AG04450 (cell line): ENCODE measurements at regions of chr2 and their contacts with region 1.

Region 1: DNA sequence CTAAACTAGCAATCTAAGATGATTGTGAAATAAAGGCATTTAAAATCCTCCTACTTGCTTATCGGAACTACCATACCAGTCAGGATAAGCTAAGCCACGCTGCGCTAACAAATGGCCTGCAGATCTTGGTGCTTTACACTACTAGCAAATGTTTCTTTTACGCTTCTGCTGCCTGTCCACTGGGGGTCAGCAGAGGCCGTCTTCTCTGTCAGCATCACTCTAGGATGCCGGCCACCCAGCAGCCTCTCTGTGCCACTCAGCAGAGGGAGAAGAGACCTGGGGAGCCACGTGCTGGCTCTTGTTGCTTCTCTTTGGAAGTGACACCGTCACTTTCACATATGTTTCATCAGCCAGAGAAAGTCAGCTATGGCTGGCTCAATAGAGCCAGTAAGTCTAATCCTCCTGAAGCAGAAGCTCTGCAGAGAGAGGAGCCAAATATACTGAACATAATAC is 36.6 kb downstream of the COPS8 start:
- DNase-seq: peak; percentile 54
- H3K4me3 ChIP-seq: no peak overlapping the region
- H3K27ac ChIP-seq: no peak overlapping the region
- H3K27me3 ChIP-seq: no peaks in the 10 kb centered on the region
- CTCF ChIP-seq: peak; percentile 74

Region 2: GRCh38 chr2:236919209-236919608 is 203.0 kb before region 1 on chr2:
- CTCF ChIA-PET with region 1: no interaction called
- POLR2A ChIA-PET with region 1: no interaction called
- DNase-seq: no peak
- H3K4me3 ChIP-seq: no peak overlapping the region
- H3K27ac ChIP-seq: no peak overlapping the region
- H3K27me3 ChIP-seq: peaks cover 7% of the 10 kb centered on the region
- CTCF ChIP-seq: no peak

Region 3: GRCh38 chr2:237109421-237109934 is 12.8 kb before region 1 on chr2:
- CTCF ChIA-PET with region 1: interaction called, 12 read pairs
- POLR2A ChIA-PET with region 1: no interaction called
- DNase-seq: no peak
- H3K4me3 ChIP-seq: no peak overlapping the region
- H3K27ac ChIP-seq: no peak overlapping the region
- H3K27me3 ChIP-seq: no peaks in the 10 kb centered on the region
- CTCF ChIP-seq: no peak

Region 4: GRCh38 chr2:237165405-237166276 is 43.4 kb after region 1 on chr2:
- CTCF ChIA-PET with region 1: interaction called, 12 read pairs
- POLR2A ChIA-PET with region 1: no interaction called
- DNase-seq: no peak
- H3K4me3 ChIP-seq: no peak overlapping the region
- H3K27ac ChIP-seq: no peak overlapping the region
- H3K27me3 ChIP-seq: no peaks in the 10 kb centered on the region
- CTCF ChIP-seq: peak; percentile 72

Region 5: DNA sequence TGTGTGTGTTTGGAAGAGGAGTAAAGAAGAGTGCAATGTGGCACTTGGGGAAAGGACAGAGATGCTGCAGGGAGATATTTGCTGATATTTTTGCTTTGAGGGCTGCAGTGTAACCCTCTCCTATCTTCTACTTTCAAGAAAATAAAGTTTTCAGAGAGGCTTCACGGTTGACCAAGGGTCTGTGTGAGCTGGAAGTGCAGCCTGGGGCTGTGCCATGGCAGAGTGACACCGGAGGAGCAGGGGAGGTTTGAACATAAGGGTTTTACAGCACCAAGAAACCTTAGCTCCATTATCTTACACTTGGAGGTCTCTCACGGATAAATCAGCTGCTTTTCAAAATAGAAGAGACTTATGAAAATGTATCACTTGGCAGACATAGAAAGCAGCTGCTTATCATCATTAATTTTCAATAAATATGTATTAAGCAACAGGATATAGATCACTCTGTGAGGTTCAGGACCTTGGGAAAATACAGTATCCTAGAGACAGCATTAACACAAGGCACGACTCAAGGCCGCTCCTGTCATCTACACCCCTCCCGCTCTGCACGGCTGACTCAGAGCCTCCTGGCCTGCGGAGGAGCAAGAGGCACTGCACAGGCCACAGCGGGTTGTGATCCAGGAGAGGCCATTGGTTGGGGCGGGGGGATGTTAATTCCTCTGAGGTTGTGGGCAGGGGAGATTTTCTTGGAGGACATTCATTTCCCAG is 91.2 kb after region 1 on chr2:
- CTCF ChIA-PET with region 1: no interaction called
- POLR2A ChIA-PET with region 1: no interaction called
- DNase-seq: no peak
- H3K4me3 ChIP-seq: no peak overlapping the region
- H3K27ac ChIP-seq: peak overlapping the region; percentile 90
- H3K27me3 ChIP-seq: no peaks in the 10 kb centered on the region
- CTCF ChIP-seq: no peak

Region 6: DNA sequence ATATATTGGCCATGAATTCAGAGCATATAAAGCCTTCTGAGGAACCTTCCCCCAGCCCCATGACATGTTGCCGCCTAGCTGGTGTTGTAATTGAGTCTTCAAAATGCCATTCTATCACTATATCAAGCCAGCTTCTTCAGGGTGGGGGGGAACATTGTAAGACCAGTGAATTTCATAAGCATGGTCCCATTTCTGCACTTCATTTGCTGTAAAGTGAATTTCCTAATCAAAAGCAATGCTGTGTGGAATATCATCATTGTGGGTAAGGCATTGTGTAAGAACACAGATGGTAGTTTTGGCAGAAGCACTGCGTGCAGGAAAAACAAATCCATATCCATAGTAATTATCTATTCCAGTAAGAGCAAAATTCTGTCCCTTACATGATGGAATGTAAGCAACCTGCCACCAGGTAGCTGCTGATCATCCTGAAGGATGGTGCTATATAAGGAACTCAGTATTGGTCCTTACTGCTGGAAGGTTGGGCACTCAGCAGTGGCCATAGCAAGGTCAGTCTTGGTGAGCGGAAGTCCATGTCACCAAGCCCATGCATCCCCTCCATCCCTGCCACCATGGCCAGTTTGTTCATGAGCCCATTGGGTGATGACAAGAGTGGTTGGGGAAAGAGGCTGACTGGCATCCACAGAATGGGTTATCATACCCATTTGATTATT is 122.9 kb after region 1 on chr2:
- CTCF ChIA-PET with region 1: no interaction called
- POLR2A ChIA-PET with region 1: no interaction called
- DNase-seq: no peak
- H3K4me3 ChIP-seq: no peak overlapping the region
- H3K27ac ChIP-seq: peak overlapping the region; percentile 58
- H3K27me3 ChIP-seq: no peaks in the 10 kb centered on the region
- CTCF ChIP-seq: no peak

Region 7: DNA sequence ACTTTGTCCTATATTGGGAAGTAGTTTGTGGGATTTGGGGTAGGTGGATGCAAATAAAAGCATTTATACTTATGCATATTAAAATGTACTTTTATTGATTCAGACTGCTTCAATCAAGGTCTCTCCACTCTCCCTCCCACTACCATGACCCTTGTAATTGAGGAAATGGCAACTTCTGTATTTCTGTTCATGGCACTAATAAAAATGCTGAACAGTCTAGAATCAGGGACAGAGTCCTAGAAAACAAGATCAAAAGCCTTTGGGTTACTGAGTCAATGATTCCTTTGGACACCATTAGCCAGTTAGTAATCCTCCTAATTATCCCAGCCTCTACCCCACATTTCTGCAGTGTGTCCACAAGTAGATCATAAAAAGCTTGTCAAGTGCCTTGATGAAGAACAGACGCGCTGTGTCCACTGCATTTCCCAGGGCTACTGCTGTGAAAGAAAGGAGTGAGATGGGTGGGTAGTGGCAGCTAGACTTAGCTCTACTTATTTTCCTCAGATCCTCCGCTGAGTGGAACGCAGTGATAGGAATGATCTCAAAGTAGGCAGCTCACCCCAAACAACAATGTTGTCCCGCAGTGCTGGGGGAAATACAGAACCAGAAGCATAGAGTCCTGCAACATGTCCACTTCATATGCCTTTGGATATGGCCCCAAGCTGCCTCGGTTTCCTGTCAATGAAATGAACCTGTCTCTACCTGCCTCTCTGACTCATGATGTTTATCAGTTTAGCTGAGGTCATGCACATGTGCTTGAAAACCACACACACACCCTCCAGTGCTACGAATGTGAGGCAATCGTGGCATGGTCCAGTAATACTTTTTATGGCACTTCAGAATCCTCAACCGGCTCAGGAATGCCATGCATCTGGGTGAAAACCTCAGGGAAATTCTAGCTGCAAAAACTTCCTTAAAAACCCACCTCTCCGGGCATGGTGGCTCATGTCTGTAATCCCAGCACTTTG is 176.2 kb after region 1 on chr2:
- CTCF ChIA-PET with region 1: interaction called, 12 read pairs
- POLR2A ChIA-PET with region 1: no interaction called
- DNase-seq: no peak
- H3K4me3 ChIP-seq: no peak overlapping the region
- H3K27ac ChIP-seq: no peak overlapping the region
- H3K27me3 ChIP-seq: no peaks in the 10 kb centered on the region
- CTCF ChIP-seq: no peak

Region 8: DNA sequence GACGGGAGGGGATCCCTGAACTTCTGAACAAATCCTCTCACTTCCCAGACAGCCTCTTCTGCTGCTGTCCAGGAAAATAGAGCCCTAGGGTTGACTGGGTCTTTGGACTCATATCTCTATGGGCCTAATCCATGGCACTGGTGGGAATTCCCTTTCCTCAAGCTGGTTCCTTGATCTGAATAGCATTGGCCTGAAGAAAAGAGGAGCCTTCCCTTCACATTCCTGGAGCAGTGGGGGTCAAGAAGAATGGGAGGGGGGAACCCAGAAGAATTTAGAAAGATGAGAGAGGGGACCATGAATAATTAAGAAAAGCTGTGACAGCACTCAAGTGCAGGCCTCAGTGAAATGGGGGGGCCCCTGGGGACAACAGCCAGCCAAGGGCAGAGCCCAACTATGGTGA is 211.5 kb after region 1 on chr2:
- CTCF ChIA-PET with region 1: interaction called, 10 read pairs
- POLR2A ChIA-PET with region 1: no interaction called
- DNase-seq: no peak
- H3K4me3 ChIP-seq: no peak overlapping the region
- H3K27ac ChIP-seq: peak overlapping the region; percentile 52
- H3K27me3 ChIP-seq: no peaks in the 10 kb centered on the region
- CTCF ChIP-seq: no peak

Region 9: DNA sequence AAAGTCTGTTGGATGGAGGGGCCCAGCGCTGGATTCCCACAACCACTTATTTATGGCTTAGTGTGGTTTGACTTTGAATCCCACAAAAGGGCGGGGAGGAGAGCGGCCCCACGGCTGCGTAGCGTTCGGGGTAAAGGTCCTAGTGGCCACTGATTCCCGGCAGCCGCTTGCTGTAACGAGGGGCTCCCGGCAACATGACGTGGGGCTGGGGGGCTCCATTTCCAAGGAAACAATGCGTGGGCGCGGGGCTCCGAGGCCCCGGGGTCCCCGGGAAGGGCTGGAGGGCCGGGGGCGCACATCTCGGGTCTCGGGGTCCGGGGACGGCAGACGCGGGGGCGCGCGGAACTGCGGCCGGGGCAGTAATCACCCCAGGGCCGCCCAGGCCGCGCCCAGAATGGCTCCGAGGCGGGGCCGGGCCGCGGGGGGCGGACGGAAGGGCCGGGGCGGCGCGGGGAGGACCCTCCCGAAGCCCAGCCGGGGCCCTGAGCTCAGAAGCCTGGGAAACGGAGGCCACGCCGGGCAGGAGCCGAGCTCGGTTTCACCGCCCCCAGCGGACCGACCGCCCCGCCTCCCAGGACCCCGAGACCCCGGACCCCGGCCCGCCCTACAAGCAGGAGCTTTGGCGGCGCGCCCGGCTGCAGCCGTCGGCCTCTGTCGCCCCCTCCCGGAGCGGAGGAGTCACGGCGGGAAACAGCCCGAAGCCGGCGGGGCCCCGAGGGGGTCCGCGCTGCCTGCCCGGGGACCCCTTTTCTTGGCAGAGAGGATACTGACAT is 352.9 kb after region 1 on chr2:
- CTCF ChIA-PET with region 1: interaction called, 14 read pairs
- POLR2A ChIA-PET with region 1: no interaction called
- DNase-seq: peak; percentile 51
- H3K4me3 ChIP-seq: peak overlapping the region; percentile 64
- H3K27ac ChIP-seq: peak overlapping the region; percentile 90
- H3K27me3 ChIP-seq: no peaks in the 10 kb centered on the region
- CTCF ChIP-seq: peak; percentile 74